Activated B cell treated with CpG ODN at 0.5 μM for 24 hours (primary cell): ENCODE measurements at regions of chr11 and their contacts with region 1.

Region 1: DNA sequence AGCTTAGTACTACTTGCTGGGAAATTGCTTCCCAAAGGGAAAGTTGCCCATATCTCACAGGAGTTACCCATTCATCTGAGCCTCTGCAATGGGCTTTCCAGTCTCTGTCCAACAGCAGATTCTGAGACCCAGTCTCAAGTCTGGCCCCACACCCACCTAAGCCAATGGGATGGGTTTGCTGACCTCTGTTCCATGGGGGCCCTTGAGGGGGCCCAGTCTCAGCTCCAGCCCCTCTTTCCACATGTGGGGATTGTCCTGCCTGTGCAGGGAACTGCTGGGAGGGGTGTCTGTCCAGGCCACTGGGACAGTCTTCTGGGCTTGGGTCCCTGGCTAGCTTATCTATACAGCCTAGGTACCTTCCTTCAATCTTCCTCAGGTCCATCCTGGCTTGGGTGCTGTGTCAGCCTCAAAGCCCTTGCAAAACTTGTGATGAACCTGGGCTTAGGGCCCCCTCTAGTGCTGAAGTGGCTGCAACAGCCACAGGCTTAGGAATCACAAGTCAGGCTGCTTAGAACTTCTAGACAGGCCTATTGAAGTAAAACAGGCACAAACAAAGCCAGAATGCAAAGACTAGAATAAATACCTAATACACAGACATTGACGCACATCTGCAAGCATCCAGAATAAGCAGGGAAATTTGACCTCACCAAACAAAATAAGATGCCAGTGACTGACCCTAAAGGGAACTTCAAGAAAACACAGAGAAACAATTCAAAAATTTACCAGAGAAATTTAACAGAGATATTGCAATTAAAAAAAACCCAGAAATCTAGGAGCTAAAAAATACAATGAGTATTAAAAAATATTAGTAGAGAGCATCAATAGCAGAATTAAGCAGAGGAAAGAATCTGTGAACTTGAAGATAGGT is 11.7 kb upstream of the PATL1 start:
- DNase-seq: peak; percentile 32
- ATAC-seq: peak; percentile 88
- H3K4me3 Mint-ChIP-seq: no peak overlapping the region
- H3K27ac Mint-ChIP-seq: no peak overlapping the region
- H3K4me1 Mint-ChIP-seq: no peaks in the 10 kb centered on the region
- H3K27me3 Mint-ChIP-seq: peaks cover 9% of the 10 kb centered on the region
- CTCF ChIP-seq: no peak

Region 2: GRCh38 chr11:58647141-58647699 is 1033.3 kb before region 1 on chr11:
- CTCF ChIA-PET with region 1: no interaction called
- POLR2A ChIA-PET with region 1: no interaction called
- intact Hi-C with region 1: no loop called
- DNase-seq: peak; percentile 33
- ATAC-seq: peak; percentile 93
- H3K4me3 Mint-ChIP-seq: peak overlapping the region; percentile 3
- H3K27ac Mint-ChIP-seq: peak overlapping the region; percentile 21
- H3K4me1 Mint-ChIP-seq: peaks cover 20% of the 10 kb centered on the region
- H3K27me3 Mint-ChIP-seq: peaks cover 2% of the 10 kb centered on the region
- CTCF ChIP-seq: no peak

Region 3: GRCh38 chr11:59802639-59803176 is 122.2 kb after region 1 on chr11:
- CTCF ChIA-PET with region 1: no interaction called
- POLR2A ChIA-PET with region 1: no interaction called
- intact Hi-C with region 1: loop called (anchors 1 kb)
- DNase-seq: no peak
- ATAC-seq: peak; percentile 69
- H3K4me3 Mint-ChIP-seq: no peak overlapping the region
- H3K27ac Mint-ChIP-seq: no peak overlapping the region
- H3K4me1 Mint-ChIP-seq: no peaks in the 10 kb centered on the region
- H3K27me3 Mint-ChIP-seq: no peaks in the 10 kb centered on the region
- CTCF ChIP-seq: no peak